GM12878 (cell line): ENCODE measurements at regions of chr17 and their contacts with region 1.

Region 1: DNA sequence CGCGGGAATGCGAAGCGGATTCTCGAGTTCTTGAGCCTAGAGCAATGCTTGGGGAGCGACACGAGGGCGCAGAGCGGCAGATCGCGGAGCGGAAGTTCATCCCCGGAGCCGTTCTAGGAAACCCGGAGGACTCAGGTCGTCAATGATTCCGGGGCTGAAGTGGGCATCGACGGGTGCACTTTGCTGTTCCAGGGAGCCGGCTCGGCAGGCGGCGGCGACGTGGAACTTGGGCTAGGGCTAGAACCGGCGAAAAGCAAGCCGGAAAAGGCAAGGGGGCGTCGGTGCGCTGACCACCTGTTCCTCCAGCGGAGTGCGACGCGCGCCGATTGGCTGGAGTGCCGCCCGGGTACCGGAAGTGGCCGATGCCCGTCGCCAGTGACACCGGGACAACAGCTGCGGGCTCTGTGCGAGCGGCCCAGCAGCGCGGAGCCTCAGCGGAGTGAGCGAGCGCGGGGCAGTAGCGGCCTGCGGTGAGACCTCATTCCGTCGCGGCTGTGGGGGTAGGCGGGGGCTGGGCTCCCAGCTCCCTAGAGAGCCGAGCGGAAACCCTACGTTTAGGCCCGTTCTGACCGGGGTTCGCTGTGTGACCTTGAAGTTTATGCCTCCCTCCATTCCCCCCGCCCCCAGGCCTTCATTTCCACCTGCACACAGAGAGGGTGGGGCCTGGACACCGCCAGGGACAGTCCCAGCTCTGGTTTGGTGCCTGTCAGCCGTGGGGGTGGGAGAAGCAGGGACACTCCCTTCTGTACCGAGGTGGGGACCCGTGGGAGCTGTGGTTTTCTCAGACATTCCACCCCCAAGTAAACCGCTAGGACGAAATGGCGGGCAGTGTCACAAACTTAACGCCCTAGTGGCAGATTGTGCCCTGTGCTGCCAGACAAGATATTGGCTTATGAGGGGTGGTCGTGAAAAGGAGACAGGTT is at the start of gene ZFP3:
- DNase-seq: peak; percentile 56
- ATAC-seq: peak; percentile 98
- H3K4me3 ChIP-seq: peak within 1 kb of the TSS; percentile 67
- H3K27ac ChIP-seq: peak within 1 kb of the TSS; percentile 66
- H3K4me1 ChIP-seq: peaks cover 3% of the 10 kb centered on the region
- H3K27me3 ChIP-seq: no peaks in the 10 kb centered on the region
- CTCF ChIP-seq: peak in 2 of 3 experiments; percentile 7 to 16; a peak in 1 of 6 replicates
- EP300 ChIP-seq: peak in 1 of 2 experiments; percentile 46; a peak in 1 of 4 replicates
- POLR2A ChIP-seq: peak; percentile 94
- RAD21 ChIP-seq: no peak
- polyA plus RNA-seq, gene ZFP3: 0.37 to 0.39 TPM

Region 2: DNA sequence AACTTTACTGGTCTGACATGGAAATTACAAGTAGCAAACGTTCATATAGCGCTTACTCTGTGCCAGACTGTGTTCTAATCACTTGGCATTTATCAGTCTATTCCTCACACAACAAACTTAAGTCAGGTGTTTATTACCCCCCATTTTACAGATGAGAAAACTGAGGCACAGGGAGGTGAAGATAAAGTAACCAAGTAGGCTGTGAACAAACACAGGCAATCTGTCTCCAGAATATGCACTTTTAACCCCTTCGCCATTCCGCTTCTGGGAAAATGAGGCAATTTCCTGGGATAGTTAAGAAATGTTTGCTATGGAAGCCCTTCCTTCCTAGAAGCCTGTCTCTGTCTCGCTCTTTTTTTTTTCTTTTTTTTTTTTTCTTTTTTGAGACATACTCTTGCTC is 326.4 kb before region 1 on chr17:
- CTCF ChIA-PET with region 1: no interaction called
- POLR2A ChIA-PET with region 1: no interaction called
- RAD21 ChIA-PET with region 1: no interaction called
- SMC1A ChIA-PET with region 1: no interaction called
- in situ Hi-C with region 1: no loop called
- intact Hi-C with region 1: no loop called
- DNase-seq: no peak
- ATAC-seq: no peak
- H3K4me3 ChIP-seq: no peak overlapping the region
- H3K27ac ChIP-seq: no peak overlapping the region
- H3K4me1 ChIP-seq: peaks cover 4% of the 10 kb centered on the region; the same call in 1 of the 2 replicates
- H3K27me3 ChIP-seq: no peaks in the 10 kb centered on the region
- CTCF ChIP-seq: no peak
- EP300 ChIP-seq: no peak
- POLR2A ChIP-seq: no peak
- RAD21 ChIP-seq: no peak

Region 3: GRCh38 chr17:5191541-5192417 is 113.4 kb after region 1 on chr17 and contains the start of gene ZNF594:
- CTCF ChIA-PET with region 1: no interaction called
- POLR2A ChIA-PET with region 1: interaction called, 3 read pairs
- RAD21 ChIA-PET with region 1: interaction called, 8 read pairs
- SMC1A ChIA-PET with region 1: no interaction called
- in situ Hi-C with region 1: no loop called
- intact Hi-C with region 1: loop called (anchors 2 kb)
- DNase-seq: peak; percentile 81
- ATAC-seq: peak; percentile 100
- H3K4me3 ChIP-seq: peak within 1 kb of the TSS; percentile 68
- H3K27ac ChIP-seq: peak within 1 kb of the TSS; percentile 88
- H3K4me1 ChIP-seq: peaks cover 3% of the 10 kb centered on the region; the same call in 1 of the 2 replicates
- H3K27me3 ChIP-seq: no peaks in the 10 kb centered on the region
- CTCF ChIP-seq: peak; percentile 82 to 92 (median 83)
- EP300 ChIP-seq: 0 out of 4 replicates have a peak, but pooled peaks of 1 of the 2 experiments have one; percentile 14
- POLR2A ChIP-seq: peak; percentile 97
- RAD21 ChIP-seq: peak; percentile 50
- polyA plus RNA-seq, gene ZNF594: 0.98 to 1.7 TPM